Activated CD4-positive, alpha-beta T cell treated with anti-CD3 and anti-CD28 coated beads for 36 hours (primary cell): ENCODE measurements at regions of chr20 and their contacts with region 1.

Region 1: DNA sequence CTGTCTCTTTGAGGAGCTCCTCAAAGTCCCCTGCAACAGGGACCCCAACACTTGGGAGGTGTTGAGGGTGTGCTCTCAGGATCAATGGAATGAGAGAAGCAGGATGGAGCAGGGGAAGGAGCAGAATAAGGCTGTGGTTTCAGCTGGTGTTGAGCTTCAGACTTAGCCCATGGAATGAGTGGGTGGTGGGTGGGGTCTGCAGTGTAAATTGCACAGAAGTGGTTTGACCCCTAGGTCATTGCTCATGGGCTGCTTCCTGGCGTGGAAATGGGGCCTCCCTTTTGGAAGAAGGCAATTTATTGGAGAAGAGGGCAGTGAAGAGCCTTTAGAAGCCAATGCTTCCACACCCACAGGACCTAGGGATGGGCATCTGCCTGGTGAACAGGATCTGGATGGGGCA is 37.0 kb upstream of the KCNG1 start:
- DNase-seq: peak; percentile 20
- ATAC-seq: no peak
- H3K4me3 Mint-ChIP-seq: no peak overlapping the region
- H3K27ac Mint-ChIP-seq: peak overlapping the region; percentile 66
- H3K4me1 Mint-ChIP-seq: peaks cover 53% of the 10 kb centered on the region
- H3K27me3 Mint-ChIP-seq: peaks cover 28% of the 10 kb centered on the region

Region 2: DNA sequence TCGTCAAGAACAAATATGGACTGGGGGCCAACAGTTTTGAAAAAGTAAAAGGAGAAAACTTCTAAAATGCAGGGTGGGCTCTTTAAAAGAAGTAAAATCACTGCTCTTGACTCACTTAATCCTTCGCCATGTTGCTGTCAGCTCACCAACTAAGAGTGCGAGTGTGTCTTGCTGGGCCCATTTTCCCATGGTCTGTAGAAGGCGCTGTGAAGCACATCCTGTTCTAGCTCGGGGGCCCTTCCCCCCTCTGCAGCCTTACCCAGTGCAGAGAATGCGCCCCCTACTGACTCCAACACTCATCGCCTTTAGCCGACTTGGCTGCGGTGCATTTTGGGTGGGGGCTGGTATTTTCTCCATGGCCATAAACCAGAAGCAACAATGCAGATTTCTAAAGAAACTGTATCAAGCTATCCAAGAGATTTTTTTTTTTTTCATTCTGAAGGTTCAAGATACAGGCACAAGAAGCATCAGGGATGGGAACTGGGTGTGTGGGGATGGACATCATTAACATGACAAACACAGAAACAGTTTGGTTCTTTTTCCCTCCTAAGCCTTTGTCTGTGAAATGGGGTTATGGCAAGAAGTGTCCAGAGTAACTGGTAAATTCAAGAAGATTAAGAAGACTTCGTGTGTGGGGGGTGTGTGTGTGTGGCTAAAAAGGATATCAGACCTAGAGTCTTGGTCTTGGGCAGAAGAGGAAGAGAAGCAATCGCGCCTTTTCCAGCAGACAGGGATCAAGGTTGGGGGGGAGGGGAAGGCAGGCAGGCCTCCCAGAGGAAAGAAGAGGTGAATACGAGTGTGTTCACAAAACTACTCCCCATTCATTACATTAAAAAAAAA is 130.3 kb before region 1 on chr20:
- CTCF ChIA-PET with region 1: no interaction called
- POLR2A ChIA-PET with region 1: no interaction called
- intact Hi-C with region 1: loop called in 1 of 2 experiments (anchors 1 kb)
- DNase-seq: peak; percentile 98
- ATAC-seq: peak; percentile 80
- H3K4me3 Mint-ChIP-seq: peak overlapping the region; percentile 92
- H3K27ac Mint-ChIP-seq: peak overlapping the region; percentile 95
- H3K4me1 Mint-ChIP-seq: peaks cover 55% of the 10 kb centered on the region
- H3K27me3 Mint-ChIP-seq: no peaks in the 10 kb centered on the region

Region 3: GRCh38 chr20:51029963-51030920 is 29.6 kb before region 1 on chr20:
- CTCF ChIA-PET with region 1: interaction called, 3 read pairs
- POLR2A ChIA-PET with region 1: no interaction called
- intact Hi-C with region 1: loop called in 1 of 2 experiments (anchors 1 kb)
- DNase-seq: no peak
- ATAC-seq: no peak
- H3K4me3 Mint-ChIP-seq: no peak overlapping the region
- H3K27ac Mint-ChIP-seq: no peak overlapping the region
- H3K4me1 Mint-ChIP-seq: peaks cover 7% of the 10 kb centered on the region
- H3K27me3 Mint-ChIP-seq: peaks cover 64% of the 10 kb centered on the region

Region 4: DNA sequence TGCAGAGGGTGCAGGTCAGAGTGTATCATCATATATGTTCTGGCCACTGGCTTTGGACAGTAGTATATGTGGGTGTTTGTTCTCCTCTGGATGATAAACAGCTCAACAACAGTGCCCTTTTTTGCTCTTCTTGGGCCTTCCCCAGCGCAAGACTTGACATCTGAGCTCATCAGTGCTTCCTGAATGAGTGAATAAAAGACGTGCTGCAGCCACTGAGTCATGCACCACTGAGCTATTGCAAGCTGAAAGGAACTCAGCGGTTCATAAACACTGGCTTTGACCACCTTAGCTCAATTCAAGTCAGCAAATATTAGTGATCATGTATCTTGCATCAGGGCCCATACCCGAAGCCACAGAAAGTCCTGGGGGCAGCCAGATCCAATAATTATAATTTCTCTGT is 68.3 kb after region 1 on chr20:
- CTCF ChIA-PET with region 1: no interaction called
- POLR2A ChIA-PET with region 1: no interaction called
- intact Hi-C with region 1: loop called (anchors 1 kb)
- DNase-seq: peak; percentile 61
- ATAC-seq: peak; percentile 93
- H3K4me3 Mint-ChIP-seq: no peak overlapping the region
- H3K27ac Mint-ChIP-seq: peak overlapping the region; percentile 29
- H3K4me1 Mint-ChIP-seq: peaks cover 15% of the 10 kb centered on the region
- H3K27me3 Mint-ChIP-seq: peaks cover 13% of the 10 kb centered on the region

Region 5: DNA sequence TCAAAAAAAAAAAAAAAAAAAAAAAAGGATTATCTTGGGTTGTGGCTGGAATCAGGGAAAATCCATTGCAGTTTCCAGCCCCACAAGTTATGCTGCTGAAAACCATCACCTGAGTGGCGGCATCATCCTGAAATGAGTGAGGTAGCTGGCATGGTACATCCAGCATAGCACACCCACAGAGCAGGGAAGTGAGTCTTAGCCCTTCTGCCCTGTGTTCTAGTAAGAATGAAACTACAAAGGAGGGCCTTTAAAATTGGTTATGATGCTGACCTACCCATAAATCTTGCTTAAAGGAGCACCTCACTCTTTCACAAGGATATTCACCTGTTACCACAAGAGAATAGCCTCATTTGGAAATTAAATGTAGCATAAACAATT is 363.4 kb after region 1 on chr20:
- CTCF ChIA-PET with region 1: no interaction called
- POLR2A ChIA-PET with region 1: no interaction called
- intact Hi-C with region 1: loop called in 1 of 2 experiments (anchors 5 kb)
- DNase-seq: peak; percentile 71
- ATAC-seq: peak; percentile 77
- H3K4me3 Mint-ChIP-seq: no peak overlapping the region
- H3K27ac Mint-ChIP-seq: peak overlapping the region; percentile 92
- H3K4me1 Mint-ChIP-seq: peaks cover 84% of the 10 kb centered on the region
- H3K27me3 Mint-ChIP-seq: no peaks in the 10 kb centered on the region

Region 6: GRCh38 chr20:51500311-51500710 is 440.4 kb after region 1 on chr20:
- CTCF ChIA-PET with region 1: no interaction called
- POLR2A ChIA-PET with region 1: no interaction called
- intact Hi-C with region 1: loop called in 1 of 2 experiments (anchors 5 kb)
- DNase-seq: peak; percentile 74
- ATAC-seq: peak; percentile 72
- H3K4me3 Mint-ChIP-seq: no peak overlapping the region
- H3K27ac Mint-ChIP-seq: peak overlapping the region; percentile 91
- H3K4me1 Mint-ChIP-seq: peaks cover 82% of the 10 kb centered on the region
- H3K27me3 Mint-ChIP-seq: no peaks in the 10 kb centered on the region

Region 7: DNA sequence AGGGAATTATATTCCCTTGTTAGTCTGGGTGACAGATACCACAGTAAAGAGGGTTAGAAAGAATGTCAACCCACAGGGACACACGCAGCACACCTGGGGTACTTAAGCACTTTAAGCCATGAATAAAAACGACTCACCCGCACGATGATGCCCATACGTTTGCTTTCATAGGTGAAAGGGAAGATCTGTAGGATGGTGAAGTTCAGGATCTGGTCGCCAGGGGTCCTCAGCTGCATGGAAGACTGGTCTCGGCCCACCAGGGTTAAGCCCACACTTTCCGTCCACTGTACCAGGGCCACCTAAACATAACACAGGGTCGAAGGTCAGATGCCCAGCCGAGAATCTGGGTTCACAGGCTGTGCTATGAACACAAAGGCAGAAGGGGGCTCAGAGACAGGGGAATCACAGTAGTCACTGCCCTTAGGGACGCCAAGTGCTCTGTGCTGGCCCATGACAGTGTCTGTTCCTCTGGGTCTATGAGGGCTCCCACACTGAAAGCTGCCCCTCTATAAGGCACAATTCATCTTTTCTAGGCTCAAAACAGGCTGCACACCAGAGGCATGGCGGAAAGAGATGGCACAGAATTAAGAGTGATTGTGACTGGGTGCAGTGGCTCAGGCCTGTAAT is 579.5 kb after region 1 on chr20:
- CTCF ChIA-PET with region 1: no interaction called
- POLR2A ChIA-PET with region 1: no interaction called
- intact Hi-C with region 1: loop called in 1 of 2 experiments (anchors 10 kb)
- DNase-seq: peak; percentile 81
- ATAC-seq: peak; percentile 49
- H3K4me3 Mint-ChIP-seq: no peak overlapping the region
- H3K27ac Mint-ChIP-seq: no peak overlapping the region
- H3K4me1 Mint-ChIP-seq: peaks cover 9% of the 10 kb centered on the region
- H3K27me3 Mint-ChIP-seq: peaks cover 4% of the 10 kb centered on the region